ENCODE measurements at regions of chr2 and their contacts with region 1.

Region 1: GRCh38 chr2:224498991-224499390 is 86.2 kb downstream of the CUL3 start:
- DNase-seq: no peak
- H3K4me3 ChIP-seq: no peak overlapping the region
- H3K27ac ChIP-seq: no peak overlapping the region
- H3K4me1 ChIP-seq: no peaks in the 10 kb centered on the region
- H3K27me3 ChIP-seq: no peaks in the 10 kb centered on the region
- CTCF ChIP-seq: no peak

Region 2: GRCh38 chr2:224343226-224343625 is 155.8 kb before region 1 on chr2:
- CTCF ChIA-PET with region 1: interaction called, 12 read pairs
- POLR2A ChIA-PET with region 1: no interaction called
- intact Hi-C with region 1: no loop called
- DNase-seq: no peak
- H3K4me3 ChIP-seq: no peak overlapping the region
- H3K27ac ChIP-seq: no peak overlapping the region
- H3K4me1 ChIP-seq: no peaks in the 10 kb centered on the region
- H3K27me3 ChIP-seq: no peaks in the 10 kb centered on the region
- CTCF ChIP-seq: no peak

Region 3: DNA sequence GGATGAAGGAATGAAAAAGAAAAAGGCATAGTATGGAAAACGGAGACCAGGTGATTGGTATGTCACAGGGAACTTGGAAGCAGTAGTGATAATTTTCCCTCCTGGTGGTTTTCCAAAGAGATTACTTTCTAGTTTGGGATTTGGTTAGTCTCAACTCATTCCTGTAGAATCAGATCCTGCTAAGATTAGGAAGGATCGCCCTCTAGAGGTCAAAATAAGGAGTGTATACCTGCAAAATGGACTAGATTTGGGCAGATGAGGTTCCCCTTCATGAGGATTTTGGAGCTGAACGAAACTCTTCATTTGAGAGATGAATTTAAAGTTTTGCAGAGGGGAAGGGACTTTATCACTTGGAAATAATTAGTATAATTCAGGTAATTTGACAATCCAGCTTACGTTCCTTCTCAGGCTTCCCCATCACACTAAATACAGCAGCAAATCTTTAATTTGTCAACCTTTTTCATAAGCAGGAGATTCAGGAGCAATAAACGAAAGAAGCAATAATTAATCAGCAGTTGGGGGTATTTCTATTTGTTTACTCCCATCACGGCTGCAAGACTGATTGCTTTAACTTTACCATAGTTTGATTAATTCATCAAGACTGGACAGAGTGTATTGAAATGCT is 151.9 kb after region 1 on chr2:
- CTCF ChIA-PET with region 1: no interaction called
- POLR2A ChIA-PET with region 1: no interaction called
- intact Hi-C with region 1: no loop called
- DNase-seq: peak; percentile 43 to 75
- H3K4me3 ChIP-seq: no peak overlapping the region
- H3K27ac ChIP-seq: no peak overlapping the region
- H3K4me1 ChIP-seq: peaks cover 6% of the 10 kb centered on the region
- H3K27me3 ChIP-seq: no peaks in the 10 kb centered on the region
- CTCF ChIP-seq: peak; percentile 100

Measured in PC-9 (cell line).